Activated naive CD4-positive, alpha-beta T cell treated with anti-CD3 and anti-CD28 coated beads for 36 hours (primary cell): ENCODE measurements at regions of chr14 and their contacts with region 1.

Region 1: DNA sequence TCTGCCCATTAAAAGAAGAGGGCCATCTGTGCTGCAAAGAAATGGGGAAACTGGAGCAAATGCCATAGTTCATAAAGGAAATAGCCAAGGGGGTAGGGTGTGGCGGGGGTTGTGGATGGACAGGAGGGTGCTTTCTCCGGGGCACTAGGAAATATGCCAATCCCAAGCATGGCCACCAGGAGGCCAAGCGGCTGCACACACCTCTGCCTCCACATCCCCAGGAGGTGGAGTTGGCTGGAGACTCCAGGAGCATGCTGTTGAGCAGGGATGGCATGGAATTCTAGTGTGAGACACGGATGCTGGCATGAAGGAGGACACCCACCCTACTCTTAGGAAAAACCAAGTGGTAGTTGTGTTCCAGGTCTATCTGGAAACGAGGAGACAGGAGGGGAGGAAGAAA is 25.2 kb downstream of the NID2 start:
- DNase-seq: peak; percentile 48
- H3K4me3 Mint-ChIP-seq: no peak overlapping the region
- H3K27ac Mint-ChIP-seq: no peak overlapping the region
- H3K4me1 Mint-ChIP-seq: peaks cover 19% of the 10 kb centered on the region
- H3K27me3 Mint-ChIP-seq: no peaks in the 10 kb centered on the region

Region 2: DNA sequence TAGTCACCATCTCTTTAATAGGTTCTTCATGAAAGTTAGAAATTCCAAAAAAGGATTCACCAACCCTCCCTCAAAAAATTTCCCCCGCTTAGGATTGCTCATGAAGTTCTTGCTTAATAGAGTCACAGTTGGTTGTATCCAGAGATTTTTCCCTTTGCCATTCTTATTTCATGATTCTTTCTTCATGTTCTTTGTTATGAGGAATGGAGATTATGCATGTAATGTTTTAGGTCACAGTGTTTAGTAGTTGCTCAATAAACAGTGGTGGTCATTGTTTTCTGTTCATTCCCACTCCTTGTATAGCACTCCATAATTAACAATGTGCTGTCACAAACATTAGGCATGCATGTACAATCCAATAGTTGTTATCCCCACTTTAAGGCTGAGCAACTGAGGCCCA is 105.6 kb before region 1 on chr14:
- CTCF ChIA-PET with region 1: no interaction called
- intact Hi-C with region 1: no loop called
- DNase-seq: no peak
- H3K4me3 Mint-ChIP-seq: no peak overlapping the region
- H3K27ac Mint-ChIP-seq: no peak overlapping the region
- H3K4me1 Mint-ChIP-seq: peaks cover 53% of the 10 kb centered on the region
- H3K27me3 Mint-ChIP-seq: no peaks in the 10 kb centered on the region

Region 3: GRCh38 chr14:52021957-52022600 is 21.6 kb before region 1 on chr14:
- CTCF ChIA-PET with region 1: interaction called, 13 read pairs
- intact Hi-C with region 1: no loop called
- DNase-seq: peak; percentile 14
- H3K4me3 Mint-ChIP-seq: no peak overlapping the region
- H3K27ac Mint-ChIP-seq: no peak overlapping the region
- H3K4me1 Mint-ChIP-seq: peaks cover 42% of the 10 kb centered on the region
- H3K27me3 Mint-ChIP-seq: no peaks in the 10 kb centered on the region

Region 4: DNA sequence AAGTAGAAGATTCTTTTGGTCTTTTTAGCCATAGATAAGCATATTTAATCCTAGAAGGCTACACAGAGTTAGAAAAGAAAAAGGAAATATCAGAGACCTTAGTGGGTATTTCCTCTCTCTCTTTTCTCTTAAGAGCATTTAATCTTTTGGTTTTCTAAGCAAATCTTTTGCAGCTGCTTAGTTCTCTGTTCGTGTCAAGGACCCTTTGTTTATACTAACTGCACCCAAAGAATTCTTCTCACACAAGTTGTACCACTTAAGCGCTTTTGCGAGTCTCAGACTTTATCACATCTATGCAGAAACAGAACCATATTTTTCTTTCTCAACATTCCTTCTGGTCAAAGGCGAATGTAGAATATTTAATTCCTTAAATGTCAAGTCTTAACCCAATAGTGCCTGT is 43.0 kb after region 1 on chr14:
- CTCF ChIA-PET with region 1: no interaction called
- intact Hi-C with region 1: no loop called
- DNase-seq: no peak
- H3K4me3 Mint-ChIP-seq: no peak overlapping the region
- H3K27ac Mint-ChIP-seq: no peak overlapping the region
- H3K4me1 Mint-ChIP-seq: no peaks in the 10 kb centered on the region
- H3K27me3 Mint-ChIP-seq: peaks cover 20% of the 10 kb centered on the region

Region 5: GRCh38 chr14:52131640-52132320 is 88.1 kb after region 1 on chr14:
- CTCF ChIA-PET with region 1: interaction called, 4 read pairs
- intact Hi-C with region 1: loop called (anchors 1 kb)
- DNase-seq: peak; percentile 72
- H3K4me3 Mint-ChIP-seq: no peak overlapping the region
- H3K27ac Mint-ChIP-seq: no peak overlapping the region
- H3K4me1 Mint-ChIP-seq: peaks cover 6% of the 10 kb centered on the region
- H3K27me3 Mint-ChIP-seq: peaks cover 12% of the 10 kb centered on the region

Region 6: DNA sequence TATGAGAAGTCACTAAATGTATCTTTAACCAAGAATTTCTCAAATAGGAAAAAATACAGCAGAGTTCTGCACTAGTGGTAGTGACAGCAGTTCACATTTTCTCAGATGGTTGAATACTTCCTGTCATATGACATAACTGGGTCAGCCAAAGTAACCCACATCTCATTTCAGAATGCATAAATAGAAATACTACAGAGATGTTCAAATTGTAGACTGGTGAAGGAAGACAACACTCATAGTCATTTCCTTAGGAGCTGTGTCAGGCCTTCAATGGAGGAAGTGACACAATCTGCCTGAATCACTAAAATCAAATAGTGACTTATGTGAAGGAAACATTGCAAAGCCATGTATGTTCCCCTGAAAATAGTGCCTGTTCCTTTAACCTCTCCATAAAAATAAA is 874.8 kb after region 1 on chr14:
- CTCF ChIA-PET with region 1: no interaction called
- intact Hi-C with region 1: no loop called
- DNase-seq: peak; percentile 47
- H3K4me3 Mint-ChIP-seq: no peak overlapping the region
- H3K27ac Mint-ChIP-seq: peak overlapping the region; percentile 50
- H3K4me1 Mint-ChIP-seq: peaks cover 17% of the 10 kb centered on the region
- H3K27me3 Mint-ChIP-seq: no peaks in the 10 kb centered on the region